AG04450 (cell line): ENCODE measurements at regions of chr15 and their contacts with region 1.

Region 1: GRCh38 chr15:64731012-64731806 is 44.2 kb downstream of the RBPMS2 start:
- DNase-seq: no peak
- H3K4me3 ChIP-seq: no peak overlapping the region
- H3K27ac ChIP-seq: no peak overlapping the region
- H3K27me3 ChIP-seq: no peaks in the 10 kb centered on the region
- CTCF ChIP-seq: peak; percentile 91

Region 2: GRCh38 chr15:64681424-64682024 is 49.7 kb before region 1 on chr15:
- CTCF ChIA-PET with region 1: interaction called, 201 read pairs
- POLR2A ChIA-PET with region 1: interaction called, 9 read pairs
- DNase-seq: no peak
- H3K4me3 ChIP-seq: no peak overlapping the region
- H3K27ac ChIP-seq: peak overlapping the region; percentile 12
- H3K27me3 ChIP-seq: no peaks in the 10 kb centered on the region
- CTCF ChIP-seq: peak; percentile 70

Region 3: DNA sequence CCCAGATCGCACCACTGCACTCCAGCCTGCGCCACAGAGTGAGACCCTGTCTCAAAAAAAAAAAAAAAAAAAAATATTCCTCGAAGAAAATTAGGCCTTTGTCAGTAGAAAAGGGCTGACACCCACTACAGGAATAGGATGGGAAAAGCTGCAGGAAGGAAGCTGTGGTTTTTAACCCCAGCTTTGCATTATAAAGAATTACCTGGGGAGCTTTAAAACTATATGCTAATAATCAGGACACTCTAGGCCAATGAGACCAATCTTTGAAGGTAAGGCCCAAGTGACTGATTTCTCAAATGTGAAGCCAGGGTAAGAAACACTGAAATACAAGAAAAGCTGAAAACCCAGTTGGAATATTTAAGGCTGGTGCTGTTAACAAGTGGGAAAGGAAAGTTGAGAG is 30.2 kb before region 1 on chr15:
- CTCF ChIA-PET with region 1: interaction called, 19 read pairs
- POLR2A ChIA-PET with region 1: no interaction called
- DNase-seq: no peak
- H3K4me3 ChIP-seq: peak overlapping the region; percentile 84
- H3K27ac ChIP-seq: peak overlapping the region; percentile 21
- H3K27me3 ChIP-seq: no peaks in the 10 kb centered on the region
- CTCF ChIP-seq: no peak

Region 4: DNA sequence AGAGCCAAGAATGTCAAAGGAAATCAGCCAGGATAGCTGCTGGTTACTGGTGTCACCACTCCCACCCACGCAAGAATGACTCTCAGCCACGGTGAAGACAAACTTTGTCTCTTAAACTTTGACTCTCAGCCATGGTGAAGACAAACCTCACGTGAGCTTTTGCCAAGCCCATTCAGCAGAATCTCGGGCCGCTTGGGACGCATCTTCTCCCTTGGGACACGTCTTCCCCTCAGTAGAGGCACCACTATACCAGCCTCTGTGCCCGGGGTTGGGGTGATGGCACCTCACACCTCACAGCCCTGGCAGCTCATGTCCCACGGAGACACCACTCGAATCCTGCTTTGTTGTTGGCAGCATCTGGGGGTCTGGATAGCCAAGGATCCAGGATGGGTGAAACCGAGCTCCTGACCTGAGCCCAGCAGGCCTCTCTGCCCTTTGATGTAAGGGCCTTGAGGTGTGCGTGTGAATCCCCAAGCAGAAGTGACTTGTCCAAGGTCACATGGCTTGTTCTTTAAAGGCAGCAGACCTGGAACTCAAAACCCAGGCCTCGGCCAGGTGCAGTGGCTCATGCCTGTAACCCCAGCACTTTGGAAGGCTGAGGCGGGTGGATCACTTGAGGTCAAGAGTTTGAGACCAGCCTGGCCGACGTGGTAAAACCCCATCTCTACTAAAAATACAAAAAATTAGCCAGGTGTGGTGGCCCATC is 22.4 kb after region 1 on chr15:
- CTCF ChIA-PET with region 1: interaction called, 10 read pairs
- POLR2A ChIA-PET with region 1: no interaction called
- DNase-seq: no peak
- H3K4me3 ChIP-seq: no peak overlapping the region
- H3K27ac ChIP-seq: no peak overlapping the region
- H3K27me3 ChIP-seq: peaks cover 3% of the 10 kb centered on the region
- CTCF ChIP-seq: no peak

Region 5: GRCh38 chr15:64809649-64810496 is 78.7 kb after region 1 on chr15:
- CTCF ChIA-PET with region 1: interaction called, 86 read pairs
- POLR2A ChIA-PET with region 1: interaction called, 3 read pairs
- DNase-seq: no peak
- H3K4me3 ChIP-seq: no peak overlapping the region
- H3K27ac ChIP-seq: no peak overlapping the region
- H3K27me3 ChIP-seq: peaks cover 7% of the 10 kb centered on the region
- CTCF ChIP-seq: peak; percentile 96